Caco-2 (cell line): ENCODE measurements at regions of chr4 and their contacts with region 1.

Region 1: GRCh38 chr4:51831133-51831532 is 11.8 kb upstream of the DCUN1D4 start:
- DNase-seq: peak; percentile 64 to 75
- H3K4me3 ChIP-seq: no peak overlapping the region
- H3K4me3 Mint-ChIP-seq: no peak overlapping the region
- H3K27ac Mint-ChIP-seq: no peak overlapping the region
- H3K4me1 ChIP-seq: no peaks in the 10 kb centered on the region
- H3K4me1 Mint-ChIP-seq: no peaks in the 10 kb centered on the region
- H3K27me3 ChIP-seq: no peaks in the 10 kb centered on the region
- H3K27me3 Mint-ChIP-seq: peaks cover 8% of the 10 kb centered on the region
- CTCF ChIP-seq: peak; percentile 68 to 78

Region 2: DNA sequence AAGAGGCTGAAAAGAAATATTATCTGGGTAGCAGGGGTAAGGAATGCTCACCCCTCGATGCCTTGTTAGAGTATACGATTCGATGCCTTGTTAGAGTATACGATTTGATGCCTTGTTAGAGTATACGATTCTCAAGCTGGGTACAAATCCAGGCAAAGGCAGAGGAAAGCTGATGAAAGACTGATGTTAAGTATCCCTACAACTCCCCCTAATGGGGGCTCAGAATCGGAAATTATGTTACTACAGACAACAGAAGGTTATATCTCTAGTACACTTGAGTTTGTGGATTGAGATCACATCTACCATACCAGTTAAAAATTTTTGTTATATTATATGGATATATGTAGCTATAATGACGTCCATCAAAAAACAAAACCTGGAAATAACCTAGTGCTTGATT is 184.2 kb after region 1 on chr4:
- CTCF ChIA-PET with region 1: no interaction called
- POLR2A ChIA-PET with region 1: no interaction called
- intact Hi-C with region 1: loop called (anchors 1 kb)
- DNase-seq: peak in 1 of 2 experiments; percentile 32
- H3K4me3 ChIP-seq: no peak overlapping the region
- H3K4me3 Mint-ChIP-seq: no peak overlapping the region
- H3K27ac Mint-ChIP-seq: no peak overlapping the region
- H3K4me1 ChIP-seq: peaks cover 3% of the 10 kb centered on the region; the same call in 1 of the 2 replicates
- H3K4me1 Mint-ChIP-seq: no peaks in the 10 kb centered on the region
- H3K27me3 ChIP-seq: no peaks in the 10 kb centered on the region
- H3K27me3 Mint-ChIP-seq: no peaks in the 10 kb centered on the region
- CTCF ChIP-seq: peak; percentile 28 to 31

Region 3: DNA sequence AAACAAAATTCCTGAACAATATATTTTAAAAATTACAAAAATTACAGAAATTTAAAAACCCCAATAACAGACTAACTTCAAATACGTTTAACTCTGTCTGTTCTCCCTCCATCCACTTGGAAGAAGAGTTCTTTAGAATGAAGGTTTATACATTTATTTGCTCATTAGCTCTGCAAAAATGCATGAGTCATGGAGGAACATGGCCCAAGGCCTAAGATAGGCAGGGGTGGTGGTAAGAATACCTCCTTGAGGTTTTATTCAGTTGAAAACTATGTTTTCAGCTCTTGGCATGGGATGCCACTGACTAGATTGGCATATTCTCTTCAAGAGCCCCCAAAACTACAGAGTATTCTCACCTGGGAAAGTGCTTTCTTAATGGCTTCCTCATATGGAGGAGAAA is 197.8 kb after region 1 on chr4:
- CTCF ChIA-PET with region 1: no interaction called
- POLR2A ChIA-PET with region 1: no interaction called
- intact Hi-C with region 1: loop called (anchors 1 kb)
- DNase-seq: no peak
- H3K4me3 ChIP-seq: no peak overlapping the region
- H3K4me3 Mint-ChIP-seq: no peak overlapping the region
- H3K27ac Mint-ChIP-seq: no peak overlapping the region
- H3K4me1 ChIP-seq: no peaks in the 10 kb centered on the region
- H3K4me1 Mint-ChIP-seq: no peaks in the 10 kb centered on the region
- H3K27me3 ChIP-seq: no peaks in the 10 kb centered on the region
- H3K27me3 Mint-ChIP-seq: no peaks in the 10 kb centered on the region
- CTCF ChIP-seq: no peak

Region 4: GRCh38 chr4:52164116-52164515 is 333.0 kb after region 1 on chr4:
- CTCF ChIA-PET with region 1: no interaction called
- POLR2A ChIA-PET with region 1: no interaction called
- intact Hi-C with region 1: no loop called
- DNase-seq: no peak
- H3K4me3 ChIP-seq: no peak overlapping the region
- H3K4me3 Mint-ChIP-seq: no peak overlapping the region
- H3K27ac Mint-ChIP-seq: no peak overlapping the region
- H3K4me1 ChIP-seq: no peaks in the 10 kb centered on the region
- H3K4me1 Mint-ChIP-seq: no peaks in the 10 kb centered on the region
- H3K27me3 ChIP-seq: no peaks in the 10 kb centered on the region
- H3K27me3 Mint-ChIP-seq: peaks cover 4% of the 10 kb centered on the region
- CTCF ChIP-seq: no peak